ENCODE measurements at regions of chr14 and their contacts with region 1.

Region 1: DNA sequence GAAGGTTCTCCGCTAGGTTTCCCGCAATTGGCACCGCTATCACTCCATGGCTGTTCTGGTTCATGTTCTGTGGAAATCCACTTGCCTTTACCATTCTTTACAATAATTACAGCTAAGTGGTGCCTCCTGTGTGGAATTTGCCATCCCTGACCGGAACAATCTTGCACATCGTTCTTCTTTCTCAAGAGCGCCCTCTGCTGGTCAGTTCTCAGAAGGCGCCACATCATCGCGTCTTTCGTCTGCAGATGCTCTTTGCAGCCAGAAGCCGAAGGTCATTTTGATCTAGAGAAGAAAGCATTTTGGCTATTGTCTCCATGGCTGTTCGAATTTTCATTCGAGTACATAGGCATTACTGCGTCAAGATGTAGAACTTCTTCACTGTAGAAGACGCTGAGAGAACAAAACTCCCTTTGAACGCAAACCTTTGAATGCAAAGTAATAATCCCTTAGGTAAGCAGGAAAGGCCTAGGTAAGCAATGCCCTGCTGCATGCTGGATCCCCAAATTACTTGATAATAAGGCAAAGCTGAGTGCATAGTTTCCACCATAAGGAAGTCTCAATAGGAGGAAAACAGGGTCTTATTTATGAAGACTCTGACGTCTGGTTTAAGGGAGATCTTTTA is 10.1 kb upstream of the RTRAF start:
- DNase-seq: peak; percentile 83
- H3K4me3 Mint-ChIP-seq: no peak overlapping the region
- H3K27ac Mint-ChIP-seq: no peak overlapping the region
- H3K4me1 Mint-ChIP-seq: peaks cover 23% of the 10 kb centered on the region
- H3K27me3 Mint-ChIP-seq: peaks cover 1% of the 10 kb centered on the region

Region 2: GRCh38 chr14:51828017-51828797 is 151.0 kb before region 1 on chr14:
- CTCF ChIA-PET with region 1: interaction called, 18 read pairs
- POLR2A ChIA-PET with region 1: no interaction called
- DNase-seq: peak; percentile 82
- H3K4me3 Mint-ChIP-seq: no peak overlapping the region
- H3K27ac Mint-ChIP-seq: no peak overlapping the region
- H3K4me1 Mint-ChIP-seq: no peaks in the 10 kb centered on the region
- H3K27me3 Mint-ChIP-seq: peaks cover 3% of the 10 kb centered on the region

Region 3: DNA sequence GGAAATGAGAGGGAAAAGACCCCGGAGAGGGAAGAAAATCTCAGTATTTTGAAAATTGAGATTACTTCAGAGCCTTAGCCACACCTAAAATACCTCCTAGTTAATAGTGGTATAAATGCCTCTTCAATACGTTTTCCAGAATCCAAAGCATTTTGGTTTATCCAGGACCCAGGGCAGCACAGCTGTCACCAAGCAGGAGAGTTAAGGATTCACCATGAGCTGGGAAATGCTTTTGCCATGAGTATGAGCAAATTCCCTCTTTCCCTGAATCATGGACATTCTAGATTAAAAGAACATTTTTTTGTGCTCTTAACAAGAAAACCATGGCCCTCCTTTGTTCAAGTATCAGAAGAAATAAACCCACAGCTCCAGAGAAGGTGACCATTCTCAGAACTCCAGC is 11.7 kb before region 1 on chr14:
- CTCF ChIA-PET with region 1: interaction called, 21 read pairs
- POLR2A ChIA-PET with region 1: no interaction called
- DNase-seq: no peak
- H3K4me3 Mint-ChIP-seq: no peak overlapping the region
- H3K27ac Mint-ChIP-seq: no peak overlapping the region
- H3K4me1 Mint-ChIP-seq: peaks cover 6% of the 10 kb centered on the region
- H3K27me3 Mint-ChIP-seq: no peaks in the 10 kb centered on the region

Region 4: GRCh38 chr14:52227619-52228222 is 248.5 kb after region 1 on chr14:
- CTCF ChIA-PET with region 1: no interaction called
- POLR2A ChIA-PET with region 1: no interaction called
- DNase-seq: no peak
- H3K4me3 Mint-ChIP-seq: no peak overlapping the region
- H3K27ac Mint-ChIP-seq: no peak overlapping the region
- H3K4me1 Mint-ChIP-seq: no peaks in the 10 kb centered on the region
- H3K27me3 Mint-ChIP-seq: no peaks in the 10 kb centered on the region

Measured in activated CD4-positive, alpha-beta memory T cell treated with anti-CD3 and anti-CD28 coated beads, Interleukin-2, amount 10 ng/mL, durations not matched to agents 7 days and 5 days (primary cell).